Sigmoid colon (tissue), 7 donors: ENCODE measurements at regions of chr3 and their contacts with region 1.

Region 1: DNA sequence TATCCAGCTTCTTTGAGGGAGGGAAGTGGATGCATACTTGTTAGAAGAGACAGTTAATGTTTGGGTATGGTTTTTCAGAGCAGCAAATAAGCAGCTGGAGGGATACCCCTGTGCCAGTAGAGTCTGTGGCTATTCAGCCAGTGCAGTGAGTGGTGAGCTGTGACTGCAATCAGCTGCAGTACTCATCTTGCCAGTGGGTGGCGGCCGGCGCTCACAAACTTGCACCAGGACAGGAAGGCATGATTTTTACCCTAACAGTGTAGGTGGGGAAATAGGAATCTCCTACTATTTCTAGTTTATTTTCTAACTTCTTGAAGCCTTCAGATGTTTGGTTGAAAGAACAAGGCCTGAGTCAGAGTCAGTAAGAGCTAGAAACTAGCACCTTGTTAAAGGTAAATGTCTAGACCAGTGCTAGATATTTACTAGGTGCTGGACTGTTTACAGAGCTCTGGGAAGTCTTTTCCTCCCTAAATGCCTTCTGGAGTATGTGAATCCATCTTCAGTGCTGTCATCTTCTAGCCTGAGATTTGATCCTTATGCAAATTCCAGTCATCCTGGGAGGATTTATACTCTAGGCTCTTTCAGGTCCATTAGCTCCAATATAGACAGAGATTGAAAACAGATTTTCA is 23.6 kb downstream of the TIMP4 start:
- DNase-seq: peak; percentile 84
- H3K4me3 ChIP-seq: no peak overlapping the region
- H3K27ac ChIP-seq: no peak overlapping the region
- H3K4me1 ChIP-seq: no peaks in the 10 kb centered on the region
- H3K27me3 ChIP-seq: peaks cover 0 to 12% (median 0%) of the 10 kb centered on the region in 3 donors
- CTCF ChIP-seq: peak; percentile 62 to 87 (median 82)
- EP300 ChIP-seq: no peak
- POLR2A ChIP-seq: no peak

Region 2: DNA sequence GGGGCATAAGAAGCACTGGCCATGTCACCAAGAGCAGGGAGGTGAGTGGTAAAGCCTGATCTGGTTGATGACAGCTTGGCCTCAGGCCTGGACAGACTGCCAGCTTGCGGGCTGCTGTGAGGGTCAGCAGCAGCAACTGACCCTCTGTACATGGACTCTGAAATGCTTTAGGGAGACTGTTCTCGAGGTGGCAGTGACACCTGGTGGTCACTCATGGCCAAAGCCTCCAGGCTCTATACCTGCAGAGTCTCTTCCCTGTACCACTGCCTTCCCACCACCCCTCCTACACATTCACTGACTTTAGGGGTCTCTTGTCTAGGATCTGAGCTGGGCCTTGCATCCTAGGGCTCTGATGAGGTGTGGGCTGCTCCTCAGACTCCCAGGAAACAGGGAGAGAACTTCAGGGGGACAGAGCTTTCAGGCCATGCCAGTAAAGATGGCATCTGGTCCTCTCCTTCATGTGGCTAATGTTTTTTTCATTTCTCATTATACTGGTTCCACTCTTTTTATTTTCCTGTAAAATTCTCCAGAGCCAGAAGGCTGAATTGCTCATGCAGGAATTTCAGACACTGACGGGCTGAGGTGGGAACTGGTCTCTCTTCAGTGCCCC is 40.8 kb after region 1 on chr3:
- intact Hi-C with region 1: loop called (anchors 1 kb)
- DNase-seq: peak; percentile 78
- H3K4me3 ChIP-seq: no peak overlapping the region
- H3K27ac ChIP-seq: no peak overlapping the region
- H3K4me1 ChIP-seq: no peaks in the 10 kb centered on the region
- H3K27me3 ChIP-seq: no peaks in the 10 kb centered on the region
- CTCF ChIP-seq: peak; percentile 22 to 73 (median 68)
- EP300 ChIP-seq: no peak
- POLR2A ChIP-seq: no peak